Heart left ventricle (tissue), 16 donors: ENCODE measurements at regions of chr2 and their contacts with region 1.

Region 1: DNA sequence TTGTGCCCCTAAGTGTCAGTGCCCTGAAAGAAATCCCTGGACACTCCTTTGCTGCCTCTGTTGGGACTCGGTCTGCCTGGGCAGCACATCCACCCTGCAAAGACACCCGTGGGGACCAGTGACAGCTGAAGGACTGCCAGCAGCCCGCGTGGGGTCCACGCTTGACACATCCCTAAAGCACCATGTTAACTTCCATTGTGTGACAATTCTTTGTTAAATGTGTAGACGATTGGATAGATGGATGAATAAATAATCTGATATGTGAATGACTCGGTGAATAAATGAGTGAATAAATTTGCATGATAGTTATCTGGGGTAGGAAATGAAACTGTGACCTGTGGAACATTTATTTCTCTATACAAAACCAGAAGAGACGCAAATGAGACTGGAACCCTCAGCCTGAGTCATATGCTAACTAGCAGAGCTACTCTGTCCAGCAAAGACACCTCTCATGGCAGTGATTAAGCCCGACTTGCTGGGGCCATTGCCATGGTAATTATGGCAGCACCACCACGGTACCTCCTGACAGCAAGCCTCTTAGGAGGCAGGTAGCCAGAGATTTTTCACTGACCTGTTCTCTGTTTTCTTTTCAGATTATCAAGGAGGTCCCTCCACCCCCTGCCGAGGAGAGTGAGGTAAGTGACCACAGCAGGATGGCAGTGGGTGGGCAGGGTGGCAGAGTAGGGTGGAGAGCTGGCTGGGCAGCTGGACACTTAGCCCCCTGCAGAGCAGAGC is 156.8 kb downstream of the ANTXR1 start:
- DNase-seq: no peak
- ATAC-seq: no peak
- H3K4me3 ChIP-seq: no peak overlapping the region
- H3K27ac ChIP-seq: peak overlapping the region in 1 of 12 donors; percentile 19
- H3K4me1 ChIP-seq: peaks cover 0 to 48% (median 10%) of the 10 kb centered on the region in 12 donors
- H3K27me3 ChIP-seq: no peaks in the 10 kb centered on the region
- CTCF ChIP-seq: no peak
- POLR2A ChIP-seq: no peak

Region 2: GRCh38 chr2:69077252-69077953 is 92.4 kb before region 1 on chr2:
- intact Hi-C with region 1: loop called in 1 of 10 experiments (anchors 5 kb)
- DNase-seq: peak in 2 of 5 donors; percentile 29 to 44
- ATAC-seq: peak in 2 of 4 donors; percentile 13 to 80
- H3K4me3 ChIP-seq: no peak overlapping the region
- H3K27ac ChIP-seq: peak overlapping the region in 3 of 12 donors; percentile 31 to 46 (median 46)
- H3K4me1 ChIP-seq: peaks cover 0 to 28% (median 3%) of the 10 kb centered on the region in 12 donors
- H3K27me3 ChIP-seq: no peaks in the 10 kb centered on the region
- CTCF ChIP-seq: no peak
- POLR2A ChIP-seq: no peak